Activated CD8-positive, alpha-beta T cell treated with anti-CD3 and anti-CD28 coated beads, Interleukin-2, amount 10 ng/mL, durations not matched to agents 7 days and 5 days (primary cell): ENCODE measurements at regions of chr11 and their contacts with region 1.

Region 1: DNA sequence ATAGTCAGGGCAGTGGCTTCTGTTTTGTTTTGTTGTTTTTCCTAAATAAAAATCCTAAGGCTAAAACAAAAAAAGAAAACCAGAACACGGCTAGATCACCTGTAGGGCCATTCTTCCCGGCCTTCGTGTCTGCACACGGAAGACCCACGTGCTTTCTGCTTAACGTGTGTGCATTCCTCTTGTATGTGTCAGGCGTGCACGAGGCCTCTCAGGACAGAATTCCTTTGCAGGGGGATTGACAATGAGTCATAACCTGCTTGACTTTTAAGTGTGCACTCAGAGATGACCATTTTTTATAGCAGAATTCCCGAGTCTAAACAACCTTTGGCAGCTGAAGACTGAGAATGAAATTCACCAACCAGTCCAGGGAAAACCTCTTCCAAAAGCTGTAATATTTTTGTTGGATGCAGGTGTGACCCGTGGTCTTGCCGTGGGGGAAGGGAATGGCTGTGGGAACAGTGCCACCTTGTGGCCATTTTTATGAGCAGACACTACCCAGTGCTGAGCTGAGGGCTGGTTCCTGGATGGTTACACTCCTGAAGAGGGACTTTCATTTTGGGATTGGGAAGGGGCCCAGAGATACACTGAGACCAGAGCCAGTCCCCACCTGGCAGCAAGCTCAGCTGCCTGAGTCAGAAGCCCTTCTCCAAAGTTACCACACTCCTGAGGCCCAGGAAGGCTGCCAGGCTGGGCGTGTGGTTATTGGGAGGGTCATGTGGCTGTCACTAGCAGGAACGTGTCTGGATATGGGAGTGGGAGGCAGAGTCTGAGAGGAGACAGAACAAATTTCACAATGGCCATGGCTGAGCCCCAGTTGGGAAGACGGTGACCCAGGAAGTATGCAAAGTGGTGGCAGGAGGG is 35.8 kb upstream of the DKK3 start:
- DNase-seq: peak; percentile 75
- ATAC-seq: peak; percentile 81
- H3K4me3 Mint-ChIP-seq: no peak overlapping the region
- H3K27ac Mint-ChIP-seq: no peak overlapping the region
- H3K4me1 Mint-ChIP-seq: peaks cover 10% of the 10 kb centered on the region
- H3K27me3 Mint-ChIP-seq: peaks cover 6% of the 10 kb centered on the region

Region 2: GRCh38 chr11:11798586-11799438 is 245.4 kb before region 1 on chr11:
- CTCF ChIA-PET with region 1: interaction called, 26 read pairs
- POLR2A ChIA-PET with region 1: no interaction called
- DNase-seq: peak; percentile 83
- ATAC-seq: peak; percentile 82
- H3K4me3 Mint-ChIP-seq: no peak overlapping the region
- H3K27ac Mint-ChIP-seq: no peak overlapping the region
- H3K4me1 Mint-ChIP-seq: no peaks in the 10 kb centered on the region
- H3K27me3 Mint-ChIP-seq: peaks cover 31% of the 10 kb centered on the region

Region 3: DNA sequence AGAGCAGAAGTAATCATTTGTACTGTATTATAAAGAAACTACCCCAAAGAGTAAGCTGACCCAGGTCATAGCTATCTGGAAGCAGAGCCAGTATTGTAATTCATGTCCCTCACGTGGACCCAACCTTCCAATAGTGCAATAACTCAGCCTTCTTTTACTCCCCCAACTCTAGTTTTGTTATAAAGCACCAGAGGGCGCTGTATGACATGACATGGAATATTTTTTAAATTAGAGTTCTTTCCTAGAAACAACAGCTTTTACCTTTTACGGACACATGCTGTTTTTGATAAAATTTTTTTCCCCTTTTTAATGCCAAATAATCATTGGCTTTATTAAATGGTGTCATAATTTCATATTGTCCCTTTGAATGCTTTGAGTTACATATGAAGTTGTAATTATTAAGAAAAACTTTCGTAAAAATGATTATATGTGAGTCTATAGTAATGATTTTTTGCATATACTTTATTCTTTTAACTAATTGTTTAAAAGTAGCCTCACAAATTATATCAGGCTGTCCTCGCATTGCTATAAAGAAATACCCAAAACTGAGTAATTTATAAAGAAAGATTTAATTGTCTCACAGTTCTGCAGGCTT is 112.6 kb before region 1 on chr11:
- CTCF ChIA-PET with region 1: interaction called, 31 read pairs
- POLR2A ChIA-PET with region 1: no interaction called
- DNase-seq: peak; percentile 27
- ATAC-seq: peak; percentile 49
- H3K4me3 Mint-ChIP-seq: no peak overlapping the region
- H3K27ac Mint-ChIP-seq: no peak overlapping the region
- H3K4me1 Mint-ChIP-seq: peaks cover 6% of the 10 kb centered on the region
- H3K27me3 Mint-ChIP-seq: no peaks in the 10 kb centered on the region